ENCODE measurements at regions of chr14 and their contacts with region 1.

Region 1: DNA sequence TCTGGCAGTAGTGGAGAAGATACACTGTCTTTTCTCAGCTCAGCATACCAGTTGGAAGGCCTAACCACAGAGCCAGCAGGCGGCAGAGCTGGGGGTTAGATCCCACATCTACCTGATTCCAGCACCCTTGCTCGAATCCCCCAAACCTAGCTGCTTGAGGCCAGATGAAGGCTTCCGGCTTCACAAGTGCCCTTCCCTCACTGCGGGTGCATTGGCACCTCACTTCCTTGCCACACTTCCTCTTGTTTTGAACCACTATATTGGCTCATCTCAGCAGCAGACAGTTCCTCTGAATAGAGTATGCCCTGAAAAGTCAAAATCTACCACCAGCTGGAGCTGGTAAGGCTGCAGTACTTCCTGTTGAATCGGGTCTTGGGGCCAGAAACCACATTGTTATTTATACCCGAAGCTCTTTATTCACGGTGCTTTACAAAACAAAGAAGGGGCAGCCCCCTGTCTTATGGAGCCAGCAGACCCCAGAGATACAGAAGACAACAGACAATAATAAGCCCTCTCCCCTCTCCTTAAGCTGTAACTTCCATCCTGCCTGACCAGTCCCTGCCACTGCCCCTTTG is 233.7 kb downstream of the EFCAB11 start:
- DNase-seq: peak; percentile 65 to 91 (median 78)
- ATAC-seq: peak; percentile 92 to 94 (median 94)
- H3K4me3 ChIP-seq: peak overlapping the region; percentile 15 to 23
- H3K4me3 Mint-ChIP-seq: peak overlapping the region; percentile 63 to 88 (median 72)
- H3K27ac ChIP-seq: peak overlapping the region; percentile 95
- H3K27ac Mint-ChIP-seq: peak overlapping the region; percentile 97 to 99
- H3K4me1 ChIP-seq: peaks cover 65 to 87% of the 10 kb centered on the region in 2 experiments
- H3K4me1 Mint-ChIP-seq: peaks cover 84 to 90% (median 89%) of the 10 kb centered on the region in 3 donors
- H3K27me3 ChIP-seq: no peaks in the 10 kb centered on the region
- H3K27me3 Mint-ChIP-seq: no peaks in the 10 kb centered on the region

Region 2: DNA sequence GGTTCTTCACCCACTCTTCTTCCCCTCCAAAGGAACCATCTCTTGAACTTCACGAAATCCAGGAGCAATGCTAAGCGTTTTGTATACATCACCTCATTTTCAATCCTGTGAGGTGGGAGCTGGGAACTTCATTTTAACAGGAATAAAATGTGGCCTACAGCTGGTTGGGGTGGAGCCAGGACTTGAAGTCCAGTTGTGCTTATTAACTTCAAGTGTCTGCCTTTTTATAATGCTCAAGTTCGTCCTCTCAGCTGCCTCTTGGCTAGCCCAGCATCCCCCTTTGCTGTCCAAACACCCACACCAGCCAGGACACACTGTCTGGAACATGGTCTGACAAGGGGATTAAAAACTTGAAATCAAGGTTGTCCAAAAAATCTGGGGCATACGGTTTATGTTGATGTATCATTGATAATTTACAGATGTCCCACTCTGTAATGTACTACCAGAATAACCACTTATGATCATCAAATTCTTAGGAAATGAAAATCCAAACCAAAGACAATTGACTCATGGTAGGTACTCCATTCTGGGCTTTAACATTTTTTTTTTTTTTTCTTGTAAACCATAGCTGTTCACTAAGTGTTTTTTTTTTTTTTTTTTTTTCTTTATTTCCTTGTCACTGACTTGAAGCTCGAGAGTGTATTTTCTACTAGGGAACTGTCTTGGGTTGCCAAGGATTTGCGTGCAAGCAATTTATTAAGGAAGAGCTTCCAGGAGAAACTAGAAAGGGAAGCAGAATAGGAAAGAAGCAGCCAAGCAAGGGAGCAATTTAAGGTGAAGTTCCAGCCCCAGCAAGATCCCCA is 18.6 kb before region 1 on chr14:
- CTCF ChIA-PET with region 1: interaction called in 1 of 2 experiments, 4 read pairs
- POLR2A ChIA-PET with region 1: interaction called, 4 to 11 read pairs
- DNase-seq: no peak
- ATAC-seq: peak in 1 of 4 experiments; percentile 5
- H3K4me3 ChIP-seq: peak overlapping the region; percentile 29 to 54
- H3K4me3 Mint-ChIP-seq: peak overlapping the region; percentile 76 to 82 (median 76)
- H3K27ac ChIP-seq: peak overlapping the region; percentile 58
- H3K27ac Mint-ChIP-seq: peak overlapping the region; percentile 82 to 91
- H3K4me1 ChIP-seq: peaks cover 30 to 35% of the 10 kb centered on the region in 2 experiments
- H3K4me1 Mint-ChIP-seq: peaks cover 42 to 50% (median 49%) of the 10 kb centered on the region in 3 donors
- H3K27me3 ChIP-seq: no peaks in the 10 kb centered on the region
- H3K27me3 Mint-ChIP-seq: no peaks in the 10 kb centered on the region

Region 3: DNA sequence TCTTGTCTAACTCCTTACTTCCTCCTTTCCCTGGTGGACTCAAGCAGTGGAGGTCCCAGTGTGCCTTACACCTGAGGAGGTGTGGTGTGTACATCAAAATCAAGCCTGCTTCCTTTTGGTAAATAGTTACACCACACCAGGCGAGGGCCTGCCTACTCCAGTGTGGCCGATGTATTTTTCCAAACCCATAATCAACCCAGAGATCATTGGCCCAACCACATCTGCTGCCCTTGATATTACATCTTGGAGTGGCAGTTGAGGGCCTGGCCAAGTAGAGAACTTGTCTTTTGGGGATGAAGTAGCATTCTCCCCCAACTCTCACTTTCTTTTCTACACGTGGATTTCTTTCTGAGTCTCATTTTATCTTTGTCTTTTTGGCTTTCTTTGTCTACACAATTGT is 46.3 kb after region 1 on chr14:
- CTCF ChIA-PET with region 1: interaction called in 1 of 2 experiments, 3 read pairs
- POLR2A ChIA-PET with region 1: interaction called in 1 of 2 experiments, 11 read pairs
- DNase-seq: no peak
- ATAC-seq: no peak
- H3K4me3 ChIP-seq: no peak overlapping the region
- H3K4me3 Mint-ChIP-seq: peak overlapping the region in 1 of 3 donors; percentile 52
- H3K27ac ChIP-seq: no peak overlapping the region
- H3K27ac Mint-ChIP-seq: peak overlapping the region; percentile 74 to 81
- H3K4me1 ChIP-seq: peaks cover 11 to 29% of the 10 kb centered on the region in 2 experiments
- H3K4me1 Mint-ChIP-seq: peaks cover 33 to 48% (median 33%) of the 10 kb centered on the region in 3 donors
- H3K27me3 ChIP-seq: no peaks in the 10 kb centered on the region
- H3K27me3 Mint-ChIP-seq: no peaks in the 10 kb centered on the region

Region 4: DNA sequence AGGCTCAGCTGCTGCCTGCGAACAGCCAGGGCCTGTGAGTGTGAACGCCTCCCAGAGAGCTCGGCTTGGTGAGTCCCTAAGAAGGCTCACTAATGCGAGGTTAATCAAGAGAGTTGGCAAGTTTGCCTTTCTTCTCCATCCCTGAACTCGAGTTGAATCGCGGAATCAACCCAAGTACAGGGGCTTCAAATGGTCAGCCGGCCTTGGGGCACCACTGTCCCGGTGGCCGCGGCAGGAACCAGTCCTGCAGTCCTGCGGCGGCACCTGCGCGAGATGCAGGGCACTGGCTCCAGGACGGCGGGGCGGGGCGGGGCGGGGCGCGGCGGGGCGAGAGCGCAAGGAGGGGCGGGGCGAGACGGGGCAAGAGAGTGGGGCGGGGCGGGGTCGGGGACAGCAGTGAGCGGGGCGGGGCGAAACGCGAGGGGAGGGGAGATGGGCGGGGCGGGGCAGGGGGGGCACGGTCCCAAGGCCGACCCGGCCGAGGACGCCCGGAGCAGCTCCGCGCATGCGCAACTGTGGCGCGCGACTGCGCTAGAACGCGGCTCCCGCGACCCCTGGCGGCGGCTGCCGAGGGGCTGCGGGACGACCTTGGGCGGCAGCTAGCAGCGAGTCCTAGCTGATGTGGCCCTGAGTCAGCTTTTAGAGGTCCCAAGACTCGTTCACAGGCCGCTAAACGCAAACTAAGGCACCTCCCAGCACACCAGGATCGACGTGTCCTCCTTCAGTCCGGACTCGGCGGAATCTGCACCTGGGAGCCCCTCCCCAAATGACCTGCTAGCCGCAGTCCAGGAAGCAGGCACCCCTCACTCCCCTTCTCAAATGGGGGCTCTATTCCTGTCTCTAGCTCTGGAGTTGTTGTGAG is 1037.4 kb after region 1 on chr14:
- CTCF ChIA-PET with region 1: no interaction called
- POLR2A ChIA-PET with region 1: no interaction called
- DNase-seq: peak; percentile 81 to 98 (median 89)
- ATAC-seq: peak; percentile 88 to 90 (median 90)
- H3K4me3 ChIP-seq: peak overlapping the region; percentile 64 to 73
- H3K4me3 Mint-ChIP-seq: peak overlapping the region; percentile 76 to 83 (median 80)
- H3K27ac ChIP-seq: peak overlapping the region; percentile 75
- H3K27ac Mint-ChIP-seq: peak overlapping the region; percentile 84 to 92
- H3K4me1 ChIP-seq: peaks cover 12 to 21% of the 10 kb centered on the region in 2 experiments
- H3K4me1 Mint-ChIP-seq: peaks cover 20 to 22% (median 22%) of the 10 kb centered on the region in 3 donors
- H3K27me3 ChIP-seq: no peaks in the 10 kb centered on the region
- H3K27me3 Mint-ChIP-seq: peaks cover 6 to 7% of the 10 kb centered on the region in 2 donors

Measured in T-cell (primary cell).